H1 (cell line): ENCODE measurements at regions of chr11 and their contacts with region 1.

Region 1: DNA sequence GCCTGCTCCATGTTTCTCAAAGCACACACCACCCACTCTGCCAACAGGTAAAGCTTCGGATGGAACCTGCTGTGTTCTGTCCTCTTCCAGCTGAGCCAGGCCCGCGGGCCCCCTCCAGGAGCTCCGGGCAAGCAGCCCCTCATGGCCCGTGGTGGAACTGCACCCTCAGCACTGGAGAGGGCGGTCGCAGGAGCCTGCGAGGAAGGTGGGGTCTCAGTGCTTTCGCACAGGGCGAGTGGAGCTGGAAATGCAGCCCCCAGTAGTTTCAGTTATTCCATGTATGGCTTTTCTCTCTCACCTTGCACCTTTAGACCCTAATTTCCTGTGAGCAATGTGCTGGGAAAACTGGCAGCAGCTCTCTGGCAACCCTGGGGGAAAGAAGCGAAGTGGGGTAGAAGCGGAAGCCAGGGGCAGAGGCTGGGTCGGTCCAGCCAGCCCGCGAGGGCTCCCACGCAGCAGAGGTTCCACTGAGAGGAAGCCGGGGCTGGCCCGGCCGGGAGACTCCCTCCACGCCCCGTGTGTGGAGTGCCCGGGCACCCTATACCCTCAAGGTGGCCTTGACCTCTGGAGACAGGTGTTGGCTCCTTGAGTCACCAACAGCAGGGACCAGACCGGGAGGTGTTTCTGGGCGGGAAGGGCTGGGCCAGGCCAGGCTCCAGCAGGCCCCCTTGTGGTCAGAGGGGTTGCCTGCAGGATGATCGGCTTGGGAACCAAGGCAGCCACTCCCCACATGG is 119.9 kb upstream of the TMEM45B start:
- DNase-seq: peak; percentile 41 to 91
- H3K4me3 ChIP-seq: peak overlapping the region; percentile 17 to 53 (median 24); a peak in 7 of 8 replicates
- H3K27ac ChIP-seq: no peak overlapping the region
- H3K4me1 ChIP-seq: peaks cover 0 to 3% (median 1%) of the 10 kb centered on the region in 4 experiments; a peak in 2 of 7 replicates
- H3K27me3 ChIP-seq: peaks cover 0 to 4% (median 3%) of the 10 kb centered on the region in 4 experiments; a peak in 3 of 7 replicates
- CTCF ChIP-seq: peak; percentile 79 to 81 (median 80)
- EP300 ChIP-seq: no peak
- POLR2A ChIP-seq: no peak
- RAD21 ChIP-seq: peak; percentile 61 to 67

Region 2: DNA sequence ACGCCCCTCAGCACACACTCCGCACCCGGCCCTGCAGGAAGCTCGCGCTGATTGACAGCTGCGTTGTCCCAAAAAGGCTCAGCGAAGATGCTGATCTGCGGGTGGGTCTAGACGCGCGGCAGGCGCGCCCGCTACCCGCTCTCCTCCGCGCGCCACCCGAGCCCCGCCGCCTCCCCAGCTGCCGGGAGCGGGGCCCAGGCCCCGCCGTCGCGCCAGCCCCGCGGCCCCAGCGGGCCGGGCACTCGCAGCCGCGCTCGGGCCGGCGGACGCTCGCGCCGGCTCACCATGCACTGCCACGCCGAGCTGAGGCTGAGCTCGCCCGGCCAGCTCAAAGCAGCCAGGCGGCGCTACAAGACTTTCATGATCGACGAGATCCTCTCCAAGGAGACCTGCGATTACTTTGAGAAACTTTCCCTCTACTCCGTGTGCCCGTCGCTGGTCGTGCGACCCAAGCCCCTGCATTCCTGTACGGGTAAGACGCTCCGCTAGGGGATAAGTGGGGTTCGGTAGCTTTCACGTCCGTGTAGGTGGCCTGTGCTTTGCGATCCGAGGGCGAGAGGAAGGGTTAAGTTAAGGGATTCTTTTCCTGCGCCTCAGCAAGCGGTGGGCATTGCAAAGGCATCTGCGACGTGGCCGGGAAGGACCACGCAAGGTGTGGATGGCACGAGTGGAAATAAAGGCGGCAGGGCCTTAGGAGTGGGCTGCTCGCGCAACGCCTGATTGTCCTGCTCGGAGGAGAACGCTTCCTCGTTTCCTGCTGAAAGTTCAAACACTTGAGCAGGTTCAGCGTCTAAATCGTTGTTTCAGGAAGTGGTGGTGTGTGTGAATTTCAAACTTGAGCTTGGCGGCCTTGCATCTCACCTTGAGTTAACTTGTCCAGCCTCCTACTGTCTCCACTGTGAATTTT is 319.7 kb before region 1 on chr11 and contains the start of gene BARX2:
- CTCF ChIA-PET with region 1: interaction called, 45 read pairs
- POLR2A ChIA-PET with region 1: no interaction called
- DNase-seq: peak in 1 of 2 experiments; percentile 77
- H3K4me3 ChIP-seq: peak within 1 kb of the TSS; percentile 39 to 61 (median 48)
- H3K27ac ChIP-seq: no peak within 1 kb of the TSS
- H3K4me1 ChIP-seq: peaks cover 0 to 8% (median 6%) of the 10 kb centered on the region in 4 experiments; a peak in 6 of 7 replicates
- H3K27me3 ChIP-seq: peaks cover 45 to 66% (median 63%) of the 10 kb centered on the region in 4 experiments
- CTCF ChIP-seq: peak; percentile 73 to 88 (median 73)
- EP300 ChIP-seq: no peak
- POLR2A ChIP-seq: no peak
- RAD21 ChIP-seq: peak; percentile 80 to 86
- total RNA-seq, gene BARX2: not detected in 2 replicates

Region 3: DNA sequence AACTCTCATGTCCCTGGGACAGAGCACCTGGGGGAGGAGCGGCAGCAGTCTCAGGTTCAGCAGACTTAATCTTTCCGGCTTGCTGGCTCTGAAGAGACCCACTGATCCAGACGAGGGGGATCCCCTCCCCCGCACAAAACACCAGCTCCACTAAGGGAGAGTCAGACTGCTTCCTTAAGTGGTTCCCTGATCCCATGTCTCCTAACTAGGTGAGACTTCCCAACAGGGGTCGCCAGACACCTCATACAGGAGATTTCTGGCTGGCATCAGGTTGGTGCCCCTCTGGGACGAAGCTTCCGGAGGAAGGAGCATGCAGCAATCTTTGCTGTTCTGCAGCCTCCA is 37.2 kb before region 1 on chr11:
- CTCF ChIA-PET with region 1: interaction called, 32 read pairs
- POLR2A ChIA-PET with region 1: no interaction called
- DNase-seq: peak; percentile 21 to 61
- H3K4me3 ChIP-seq: no peak overlapping the region
- H3K27ac ChIP-seq: no peak overlapping the region
- H3K4me1 ChIP-seq: peaks cover 0 to 3% (median 3%) of the 10 kb centered on the region in 4 experiments; a peak in 4 of 7 replicates
- H3K27me3 ChIP-seq: no peaks in the 10 kb centered on the region
- CTCF ChIP-seq: peak; percentile 35 to 46 (median 37)
- EP300 ChIP-seq: no peak
- POLR2A ChIP-seq: no peak
- RAD21 ChIP-seq: peak; percentile 38 to 57

Region 4: DNA sequence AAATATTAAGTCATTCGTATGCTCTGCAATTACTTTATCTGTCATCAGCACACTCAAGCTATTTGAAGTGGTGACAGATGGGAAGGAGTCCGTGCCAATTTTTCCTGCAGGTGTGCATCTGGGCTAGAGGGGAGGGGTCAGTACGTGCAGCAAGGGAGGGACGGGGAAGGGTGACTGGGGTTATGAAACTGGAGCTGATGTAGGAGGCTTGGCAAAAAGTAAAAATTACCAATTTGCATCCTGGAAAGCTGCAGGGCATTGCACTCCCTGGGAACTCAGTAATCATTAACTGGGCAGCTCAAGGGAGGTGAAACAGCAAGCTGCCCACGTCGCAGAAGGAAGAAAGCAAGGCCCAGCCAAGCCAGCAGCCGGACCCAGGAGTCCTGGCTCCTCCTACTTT is 32.8 kb after region 1 on chr11:
- CTCF ChIA-PET with region 1: interaction called, 33 read pairs
- POLR2A ChIA-PET with region 1: no interaction called
- DNase-seq: no peak
- H3K4me3 ChIP-seq: no peak overlapping the region
- H3K27ac ChIP-seq: no peak overlapping the region
- H3K4me1 ChIP-seq: no peaks in the 10 kb centered on the region
- H3K27me3 ChIP-seq: no peaks in the 10 kb centered on the region
- CTCF ChIP-seq: no peak
- EP300 ChIP-seq: no peak
- POLR2A ChIP-seq: no peak
- RAD21 ChIP-seq: no peak

Region 5: GRCh38 chr11:129750349-129751292 is 54.9 kb after region 1 on chr11:
- CTCF ChIA-PET with region 1: interaction called, 91 read pairs
- POLR2A ChIA-PET with region 1: no interaction called
- DNase-seq: peak; percentile 23 to 93
- H3K4me3 ChIP-seq: peak overlapping the region in 3 of 4 experiments; percentile 11 to 51 (median 32); a peak in 6 of 8 replicates
- H3K27ac ChIP-seq: no peak overlapping the region
- H3K4me1 ChIP-seq: peaks cover 0 to 1% (median 0%) of the 10 kb centered on the region in 4 experiments; a peak in 1 of 7 replicates
- H3K27me3 ChIP-seq: peaks cover 0 to 13% (median 3%) of the 10 kb centered on the region in 4 experiments; a peak in 2 of 7 replicates
- CTCF ChIP-seq: peak; percentile 92 to 99 (median 97)
- EP300 ChIP-seq: no peak
- POLR2A ChIP-seq: no peak
- RAD21 ChIP-seq: peak; percentile 92 to 93

Region 6: GRCh38 chr11:129787518-129788155 is 91.9 kb after region 1 on chr11:
- CTCF ChIA-PET with region 1: no interaction called
- POLR2A ChIA-PET with region 1: no interaction called
- DNase-seq: no peak
- H3K4me3 ChIP-seq: no peak overlapping the region
- H3K27ac ChIP-seq: no peak overlapping the region
- H3K4me1 ChIP-seq: no peaks in the 10 kb centered on the region
- H3K27me3 ChIP-seq: no peaks in the 10 kb centered on the region
- CTCF ChIP-seq: no peak
- EP300 ChIP-seq: no peak
- POLR2A ChIP-seq: no peak
- RAD21 ChIP-seq: no peak

Region 7: GRCh38 chr11:129804012-129804411 is 108.3 kb after region 1 on chr11:
- CTCF ChIA-PET with region 1: no interaction called
- POLR2A ChIA-PET with region 1: no interaction called
- DNase-seq: no peak
- H3K4me3 ChIP-seq: no peak overlapping the region
- H3K27ac ChIP-seq: no peak overlapping the region
- H3K4me1 ChIP-seq: no peaks in the 10 kb centered on the region; a peak in 1 of 7 replicates
- H3K27me3 ChIP-seq: no peaks in the 10 kb centered on the region
- CTCF ChIP-seq: no peak
- EP300 ChIP-seq: no peak
- POLR2A ChIP-seq: no peak
- RAD21 ChIP-seq: no peak

Region 8: GRCh38 chr11:129989149-129989813 is 293.5 kb after region 1 on chr11:
- CTCF ChIA-PET with region 1: no interaction called
- POLR2A ChIA-PET with region 1: no interaction called
- DNase-seq: no peak
- H3K4me3 ChIP-seq: no peak overlapping the region
- H3K27ac ChIP-seq: no peak overlapping the region
- H3K4me1 ChIP-seq: peaks cover 0 to 2% (median 0%) of the 10 kb centered on the region in 4 experiments; a peak in 1 of 7 replicates
- H3K27me3 ChIP-seq: peaks cover 0 to 2% (median 0%) of the 10 kb centered on the region in 4 experiments; a peak in 1 of 7 replicates
- CTCF ChIP-seq: no peak
- EP300 ChIP-seq: no peak
- POLR2A ChIP-seq: no peak
- RAD21 ChIP-seq: no peak